Left ventricle myocardium superior (tissue), 1 donor: ENCODE measurements at regions of chr12 and their contacts with region 1.

Region 1: GRCh38 chr12:58443273-58443980 is 476.9 kb downstream of the LRIG3 start:
- DNase-seq: no peak
- ATAC-seq: peak; percentile 41

Region 2: DNA sequence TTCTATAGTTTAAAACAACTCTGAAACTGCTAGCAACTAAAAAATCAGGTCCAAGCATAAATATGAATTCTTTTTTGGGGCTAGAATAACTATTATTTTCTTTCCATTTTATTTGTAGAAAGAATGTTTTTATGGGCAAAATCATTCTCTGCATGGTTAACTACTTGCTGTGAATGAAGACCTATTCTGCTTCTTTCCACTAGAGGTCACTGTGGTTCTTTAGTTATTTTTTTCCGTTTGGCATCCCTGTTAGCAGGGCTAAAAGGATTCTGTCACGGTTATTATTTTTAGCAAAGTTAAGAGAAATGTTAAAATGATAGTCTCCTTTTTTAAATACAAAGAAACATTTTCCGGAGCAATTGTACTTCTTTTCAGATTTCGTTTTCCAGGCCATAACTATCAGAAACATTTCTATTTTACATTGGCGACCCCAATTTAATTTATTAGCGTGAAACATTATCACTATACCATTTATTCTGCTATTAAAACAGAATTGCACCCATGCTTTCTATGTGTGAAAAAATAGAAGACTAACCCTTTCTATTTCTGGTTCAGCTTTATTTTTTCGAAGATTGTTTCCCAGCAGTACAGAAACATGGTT is 97.3 kb before region 1 on chr12:
- intact Hi-C with region 1: loop called (anchors 10 kb)
- DNase-seq: no peak
- ATAC-seq: no peak

Region 3: GRCh38 chr12:58703866-58704265 is 260.4 kb after region 1 on chr12:
- intact Hi-C with region 1: no loop called
- DNase-seq: no peak
- ATAC-seq: no peak

Region 4: DNA sequence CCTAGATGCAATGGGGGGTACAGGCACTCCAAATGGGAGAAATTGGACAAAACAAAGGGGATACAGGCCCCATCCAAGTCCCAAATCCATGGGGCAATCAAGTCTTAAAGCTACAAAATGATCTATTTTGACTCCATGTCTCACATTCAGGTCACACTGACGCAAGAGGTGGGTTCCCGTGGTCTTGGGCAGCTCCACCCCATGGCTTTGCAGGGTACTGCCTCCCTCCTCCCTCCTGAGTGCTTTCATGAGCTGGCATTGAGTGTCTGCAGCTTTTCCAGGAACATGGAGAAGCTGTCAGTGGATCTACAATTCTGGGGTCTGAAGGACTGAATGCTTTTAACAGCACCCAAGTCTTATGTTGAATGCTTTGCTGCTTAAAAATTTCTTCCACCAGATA is 751.4 kb after region 1 on chr12:
- intact Hi-C with region 1: no loop called
- DNase-seq: no peak
- ATAC-seq: no peak